ENCODE measurements at regions of chr15 and their contacts with region 1.

Region 1: DNA sequence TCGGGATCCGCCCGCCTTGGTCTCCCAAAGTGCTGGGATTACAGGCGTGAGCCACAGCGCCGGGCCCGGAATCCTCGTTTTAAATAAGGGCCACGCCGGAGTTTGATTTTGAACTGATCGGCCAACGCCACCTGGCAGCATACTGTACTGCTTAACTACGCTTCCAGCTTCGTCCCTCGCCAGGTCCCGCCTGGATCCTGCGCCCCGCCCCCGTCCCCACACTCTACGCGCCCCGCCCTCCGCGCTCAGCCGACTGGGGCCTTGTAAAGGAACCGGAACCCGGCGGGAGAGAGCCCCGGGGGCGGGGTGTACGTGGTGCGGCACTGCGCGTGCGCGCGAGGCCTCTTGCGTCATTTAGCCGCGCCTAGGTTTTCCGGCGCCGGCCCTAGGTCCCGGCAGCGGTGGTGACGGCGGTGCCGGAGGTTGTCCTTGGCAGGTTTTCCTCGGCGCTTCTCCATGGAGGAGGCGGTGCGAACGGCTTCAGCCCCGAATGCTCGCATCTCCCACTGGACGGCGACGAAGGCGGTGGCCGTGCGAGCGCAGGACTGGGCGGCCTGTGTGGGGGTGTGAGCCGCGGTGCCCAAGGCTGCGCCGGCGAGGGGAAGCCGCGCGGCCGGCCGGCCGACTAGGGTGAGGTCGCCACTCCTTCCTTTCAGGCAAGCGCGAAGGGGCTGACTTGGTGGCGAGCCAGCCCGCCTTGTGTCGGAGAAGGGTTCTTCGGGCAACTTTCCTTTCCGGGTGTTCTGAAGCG is at the start of gene NIPA2:
- DNase-seq: peak; percentile 98
- ATAC-seq: peak; percentile 98 to 99
- total RNA-seq, gene NIPA2: 23.7 to 35.6 TPM

Region 2: GRCh38 chr15:22786868-22787698 is 51.4 kb before region 1 on chr15:
- intact Hi-C with region 1: loop called in 1 of 2 experiments (anchors 5 kb)
- DNase-seq: no peak
- ATAC-seq: peak; percentile 27 to 29

Region 3: DNA sequence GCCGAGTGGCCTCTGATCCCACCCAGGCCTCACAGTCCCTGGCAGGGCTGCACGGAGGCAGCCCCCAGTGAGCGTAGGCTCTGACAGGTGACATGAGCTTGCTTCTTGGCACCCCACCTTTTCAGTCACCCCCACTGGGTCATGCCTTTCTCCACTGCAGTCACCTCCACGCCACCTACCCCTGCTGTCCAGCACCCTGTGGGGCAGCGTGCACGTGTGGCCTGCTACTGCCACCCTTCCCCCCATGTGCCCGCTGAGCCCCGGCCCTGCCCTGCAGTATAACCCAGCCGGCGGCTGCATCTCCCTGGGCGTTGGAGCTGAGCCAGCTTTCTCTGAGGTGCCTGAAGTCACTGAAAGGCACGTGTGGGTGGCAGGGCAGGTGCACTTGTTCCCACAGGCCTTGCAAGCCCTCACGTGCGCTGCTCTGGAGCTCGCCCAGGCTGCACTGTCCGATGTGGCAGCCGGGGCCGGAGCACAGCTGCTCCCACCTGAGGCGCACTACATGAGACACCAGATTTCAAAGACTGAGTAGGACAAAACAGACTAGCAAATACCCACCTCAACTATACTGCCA is 65.6 kb after region 1 on chr15:
- intact Hi-C with region 1: loop called in 1 of 2 experiments (anchors 10 kb)
- DNase-seq: no peak
- ATAC-seq: no peak

Region 4: GRCh38 chr15:22980189-22981050 is 142.0 kb after region 1 on chr15 and contains the start of gene CYFIP1:
- intact Hi-C with region 1: no loop called
- DNase-seq: peak; percentile 93
- ATAC-seq: peak; percentile 97 to 98
- total RNA-seq, gene CYFIP1: 44.9 to 49.4 TPM